Dendritic cell treated with granulocyte-macrophage colony-stimulating factor and Interleukin-4, amounts not matched to agents 40 ng/mL and 50 ng/mL, for 4 days (primary cell): ENCODE measurements at regions of chr6 and their contacts with region 1.

Region 1: DNA sequence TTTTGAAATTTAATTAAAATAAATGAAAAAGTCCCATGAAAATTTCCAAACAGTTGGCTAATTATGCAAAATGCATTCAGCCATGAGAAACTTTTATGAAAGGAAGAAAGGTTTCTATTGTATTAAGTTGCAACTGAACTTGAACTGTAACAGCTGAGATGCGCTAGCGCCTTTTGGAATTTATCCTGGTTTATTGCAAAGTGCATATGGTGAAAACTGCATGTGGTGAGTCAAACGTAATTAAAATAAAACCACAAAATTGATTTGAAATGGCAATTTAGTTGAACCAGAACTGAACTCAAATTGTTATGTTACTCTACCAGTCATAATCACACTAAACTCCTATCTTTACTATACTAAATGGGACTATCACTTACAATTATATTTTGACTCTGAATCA is 46.4 kb upstream of the COL21A1 start:
- H3K4me3 Mint-ChIP-seq: no peak overlapping the region
- H3K27ac Mint-ChIP-seq: no peak overlapping the region
- H3K4me1 Mint-ChIP-seq: no peaks in the 10 kb centered on the region
- H3K27me3 Mint-ChIP-seq: no peaks in the 10 kb centered on the region

Region 2: DNA sequence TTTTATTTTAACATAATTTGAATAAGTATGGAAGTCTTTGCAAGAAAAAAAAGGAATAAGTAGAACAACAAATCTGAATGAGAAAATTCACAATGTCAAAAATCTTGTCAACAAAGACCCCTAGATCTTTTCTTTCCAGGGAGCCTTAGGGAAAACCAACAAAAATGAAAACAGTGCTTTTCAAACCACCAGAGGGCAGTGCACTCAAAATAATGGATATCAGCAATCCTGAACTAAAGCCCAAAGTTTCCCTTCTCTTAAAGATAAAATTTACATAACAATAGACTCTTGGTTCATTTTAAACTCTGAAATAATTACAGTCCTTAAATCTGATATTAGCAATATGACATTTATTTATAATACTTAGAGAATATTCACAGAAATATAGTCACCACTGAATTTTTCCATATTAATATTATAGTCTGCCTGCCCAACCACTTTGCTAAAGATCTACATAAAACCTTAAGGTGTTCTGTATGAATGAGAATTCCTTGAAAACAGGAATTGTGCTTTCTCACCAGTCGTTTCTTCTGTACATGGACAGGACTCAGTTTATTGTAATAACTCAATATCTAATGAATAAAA is 313.1 kb before region 1 on chr6:
- intact Hi-C with region 1: loop called (anchors 1 kb)
- H3K4me3 Mint-ChIP-seq: no peak overlapping the region
- H3K27ac Mint-ChIP-seq: no peak overlapping the region
- H3K4me1 Mint-ChIP-seq: no peaks in the 10 kb centered on the region
- H3K27me3 Mint-ChIP-seq: peaks cover 3% of the 10 kb centered on the region